ENCODE measurements at regions of chr9 and their contacts with region 1.

Region 1: DNA sequence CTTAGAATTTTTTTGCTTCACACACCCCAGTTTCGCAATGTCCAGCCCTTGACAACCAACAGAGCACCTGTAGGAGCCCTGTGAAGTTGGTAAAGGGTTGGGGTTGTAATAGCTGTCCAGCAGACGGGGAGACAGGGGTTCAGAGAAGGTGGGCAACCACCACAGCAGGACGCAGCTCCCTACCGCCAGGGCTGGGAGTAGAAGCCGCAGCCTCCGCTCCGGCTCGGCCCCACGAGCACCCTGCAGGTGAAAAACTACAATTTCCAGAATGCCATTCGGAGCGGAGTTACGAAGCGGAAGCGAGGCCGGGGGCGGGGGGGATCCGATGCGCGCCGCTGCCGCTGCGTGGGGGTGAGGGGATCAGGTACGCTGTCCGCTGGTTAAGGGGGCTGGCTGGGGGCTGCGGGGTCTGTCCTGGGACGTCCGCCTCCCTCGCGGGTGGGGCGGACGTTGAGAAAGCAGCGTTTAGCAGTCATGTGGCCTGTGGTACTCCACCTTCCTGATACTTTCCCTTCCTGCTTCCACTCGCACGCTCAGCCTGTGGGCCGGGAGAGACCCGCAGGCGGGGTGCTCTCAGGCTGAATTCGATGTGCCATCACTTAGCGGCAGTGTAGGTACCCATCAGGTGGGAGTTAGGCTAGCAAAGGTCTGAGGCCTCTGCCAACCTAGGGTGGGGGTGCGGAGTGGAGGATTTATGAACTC is at the start of gene TRMT10B:
- DNase-seq: peak; percentile 42 to 61
- ATAC-seq: peak; percentile 92 to 93
- H3K4me3 ChIP-seq: peak within 1 kb of the TSS; percentile 75 to 98 (median 88)
- H3K27ac ChIP-seq: peak within 1 kb of the TSS; percentile 79 to 88 (median 84)
- H3K4me1 ChIP-seq: peaks cover 3 to 14% of the 10 kb centered on the region in 2 donors
- H3K27me3 ChIP-seq: no peaks in the 10 kb centered on the region
- CTCF ChIP-seq: peak in 1 of 5 experiments; percentile 25
- POLR2A ChIP-seq: peak in 1 of 2 donors; percentile 32
- total RNA-seq, gene TRMT10B: 1.5 to 10.2 (median 3.0) TPM

Region 2: GRCh38 chr9:37503736-37504135 is 249.9 kb before region 1 on chr9:
- in situ Hi-C with region 1: no loop called
- intact Hi-C with region 1: no loop called
- DNase-seq: no peak
- ATAC-seq: no peak
- H3K4me3 ChIP-seq: no peak overlapping the region
- H3K27ac ChIP-seq: no peak overlapping the region
- H3K4me1 ChIP-seq: no peaks in the 10 kb centered on the region
- H3K27me3 ChIP-seq: no peaks in the 10 kb centered on the region
- CTCF ChIP-seq: no peak
- POLR2A ChIP-seq: no peak

Region 3: GRCh38 chr9:38417003-38417945 is 663.6 kb after region 1 on chr9:
- in situ Hi-C with region 1: loop called in 1 of 4 experiments (anchors 25 kb)
- intact Hi-C with region 1: no loop called
- DNase-seq: no peak
- ATAC-seq: no peak
- H3K4me3 ChIP-seq: no peak overlapping the region
- H3K27ac ChIP-seq: no peak overlapping the region
- H3K4me1 ChIP-seq: no peaks in the 10 kb centered on the region
- H3K27me3 ChIP-seq: peaks cover 11 to 18% (median 13%) of the 10 kb centered on the region in 3 donors
- CTCF ChIP-seq: peak in 1 of 5 experiments; percentile 33
- POLR2A ChIP-seq: no peak

Measured in gastrocnemius medialis (tissue), 4 donors.